Mammary epithelial cell (primary cell): ENCODE measurements at regions of chr11 and their contacts with region 1.

Region 1: DNA sequence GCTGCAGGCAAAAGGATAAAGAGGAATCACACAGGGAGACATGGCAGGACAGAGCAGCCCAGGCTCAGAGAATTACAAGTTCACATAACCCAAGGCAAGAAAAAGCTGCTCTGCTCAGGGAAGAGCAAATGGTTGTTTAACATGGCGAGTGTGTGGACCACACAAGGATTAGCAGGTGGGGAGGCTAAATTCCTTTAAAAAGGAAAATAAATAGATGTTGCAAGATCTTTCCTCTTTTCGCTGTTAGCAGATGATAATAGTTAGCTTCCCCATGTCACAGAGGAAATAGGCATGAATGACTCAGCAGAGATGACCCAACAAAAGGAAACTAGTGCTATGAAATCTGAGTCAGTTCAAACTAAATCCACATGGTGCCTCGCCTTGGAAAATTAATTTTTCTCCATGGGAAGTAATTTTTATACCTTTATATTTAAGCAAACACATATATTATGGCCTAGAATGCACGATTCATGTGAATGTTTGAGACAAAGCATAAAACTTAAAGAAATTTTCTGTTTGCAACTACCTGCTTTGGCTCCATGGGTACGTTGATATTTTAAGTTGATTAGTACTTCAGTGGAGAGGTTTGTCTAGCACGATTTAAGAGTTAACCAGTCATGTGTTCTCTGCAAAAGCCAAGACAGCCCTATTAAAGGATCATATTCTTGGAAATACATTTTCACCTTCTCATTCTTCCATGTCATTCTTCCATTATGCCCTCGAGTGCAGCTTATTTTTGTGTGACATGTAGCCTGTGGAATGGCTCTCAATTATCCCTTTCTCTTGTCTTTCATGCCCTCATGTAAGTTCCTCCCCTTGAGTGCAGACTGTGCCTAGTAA is 38.5 kb upstream of the FJX1 start:
- DNase-seq: peak; percentile 76
- H3K4me3 ChIP-seq: no peak overlapping the region
- H3K27ac ChIP-seq: peak overlapping the region; percentile 43
- H3K4me1 ChIP-seq: peaks cover 31% of the 10 kb centered on the region
- H3K27me3 ChIP-seq: no peaks in the 10 kb centered on the region
- CTCF ChIP-seq: no peak

Region 2: GRCh38 chr11:35567737-35568465 is 11.9 kb before region 1 on chr11:
- CTCF ChIA-PET with region 1: no interaction called
- dilution Hi-C with region 1: no loop called
- in situ Hi-C with region 1: no loop called
- intact Hi-C with region 1: loop called (anchors 1 kb)
- DNase-seq: peak; percentile 94
- H3K4me3 ChIP-seq: no peak overlapping the region
- H3K27ac ChIP-seq: peak overlapping the region; percentile 70
- H3K4me1 ChIP-seq: peaks cover 22% of the 10 kb centered on the region
- H3K27me3 ChIP-seq: no peaks in the 10 kb centered on the region
- CTCF ChIP-seq: no peak

Region 3: GRCh38 chr11:35888961-35889360 is 309.2 kb after region 1 on chr11:
- CTCF ChIA-PET with region 1: no interaction called
- dilution Hi-C with region 1: no loop called
- in situ Hi-C with region 1: no loop called
- intact Hi-C with region 1: no loop called
- DNase-seq: no peak
- H3K4me3 ChIP-seq: no peak overlapping the region
- H3K27ac ChIP-seq: no peak overlapping the region
- H3K4me1 ChIP-seq: peaks cover 15% of the 10 kb centered on the region
- H3K27me3 ChIP-seq: no peaks in the 10 kb centered on the region
- CTCF ChIP-seq: no peak

Region 4: GRCh38 chr11:36240801-36241200 is 661.0 kb after region 1 on chr11:
- CTCF ChIA-PET with region 1: no interaction called
- dilution Hi-C with region 1: no loop called
- in situ Hi-C with region 1: no loop called
- intact Hi-C with region 1: no loop called
- DNase-seq: no peak
- H3K4me3 ChIP-seq: no peak overlapping the region
- H3K27ac ChIP-seq: no peak overlapping the region
- H3K4me1 ChIP-seq: no peaks in the 10 kb centered on the region
- H3K27me3 ChIP-seq: no peaks in the 10 kb centered on the region
- CTCF ChIP-seq: no peak